Testis (tissue), 5 donors: ENCODE measurements at regions of chr5 and their contacts with region 1.

Region 1: DNA sequence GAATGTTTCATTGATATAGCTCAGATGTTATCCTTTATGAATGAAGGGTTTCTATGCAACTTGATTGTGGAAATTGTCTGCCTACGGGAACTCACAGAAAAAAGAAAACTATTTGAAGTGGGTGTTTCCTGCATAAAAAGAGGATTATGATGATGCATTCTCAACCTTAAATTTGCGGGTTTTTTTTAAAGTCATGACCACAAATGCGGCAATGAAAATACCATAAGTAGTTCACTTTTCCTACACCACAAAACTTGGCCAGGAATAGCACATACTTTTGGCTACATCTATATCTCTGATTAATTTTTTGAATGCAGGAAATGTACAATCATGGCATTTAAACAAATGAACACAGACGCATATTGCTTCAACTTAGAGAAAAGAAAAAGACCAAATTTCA is 754.7 kb downstream of the DTWD2 start:
- DNase-seq: no peak
- H3K4me3 ChIP-seq: no peak overlapping the region
- H3K27ac ChIP-seq: no peak overlapping the region
- H3K4me1 ChIP-seq: no peaks in the 10 kb centered on the region
- H3K27me3 ChIP-seq: no peaks in the 10 kb centered on the region
- CTCF ChIP-seq: no peak
- POLR2A ChIP-seq: no peak

Region 2: GRCh38 chr5:117859176-117859575 is 374.4 kb before region 1 on chr5:
- intact Hi-C with region 1: no loop called
- DNase-seq: no peak
- H3K4me3 ChIP-seq: no peak overlapping the region
- H3K27ac ChIP-seq: no peak overlapping the region
- H3K4me1 ChIP-seq: no peaks in the 10 kb centered on the region
- H3K27me3 ChIP-seq: no peaks in the 10 kb centered on the region
- CTCF ChIP-seq: no peak
- POLR2A ChIP-seq: no peak

Region 3: GRCh38 chr5:118195211-118195610 is 38.4 kb before region 1 on chr5:
- intact Hi-C with region 1: loop called (anchors 5 kb)
- DNase-seq: peak; percentile 19
- H3K4me3 ChIP-seq: no peak overlapping the region
- H3K27ac ChIP-seq: no peak overlapping the region
- H3K4me1 ChIP-seq: no peaks in the 10 kb centered on the region
- H3K27me3 ChIP-seq: no peaks in the 10 kb centered on the region
- CTCF ChIP-seq: no peak
- POLR2A ChIP-seq: no peak